ENCODE measurements at regions of chr18 and their contacts with region 1.

Region 1: GRCh38 chr18:4106407-4107033 is 348.6 kb downstream of the DLGAP1 start:
- DNase-seq: peak; percentile 73
- ATAC-seq: peak; percentile 61
- H3K4me3 Mint-ChIP-seq: no peak overlapping the region
- H3K27ac Mint-ChIP-seq: no peak overlapping the region
- H3K4me1 Mint-ChIP-seq: no peaks in the 10 kb centered on the region
- H3K27me3 Mint-ChIP-seq: no peaks in the 10 kb centered on the region

Region 2: DNA sequence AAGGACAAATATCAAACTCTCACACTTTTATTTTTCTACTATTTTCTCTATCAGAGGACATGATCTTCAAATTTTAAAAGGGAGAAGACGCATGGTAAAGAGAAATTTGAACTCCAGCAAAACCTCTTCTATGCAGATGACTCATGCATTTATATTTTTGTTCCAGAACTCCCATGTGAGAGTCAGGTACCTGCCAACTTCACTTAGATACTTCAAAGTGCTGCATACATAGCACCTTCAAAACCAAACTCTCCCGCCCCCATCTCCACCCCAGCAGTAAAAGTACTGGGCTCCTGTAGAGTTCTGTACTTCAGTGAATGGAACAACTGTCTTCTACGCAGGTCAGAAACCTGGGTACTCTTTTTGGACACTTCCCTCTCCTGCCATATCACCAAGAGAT is 258.2 kb before region 1 on chr18:
- CTCF ChIA-PET with region 1: no interaction called
- POLR2A ChIA-PET with region 1: no interaction called
- DNase-seq: no peak
- ATAC-seq: no peak
- H3K4me3 Mint-ChIP-seq: no peak overlapping the region
- H3K27ac Mint-ChIP-seq: no peak overlapping the region
- H3K4me1 Mint-ChIP-seq: no peaks in the 10 kb centered on the region
- H3K27me3 Mint-ChIP-seq: peaks cover 1% of the 10 kb centered on the region

Region 3: GRCh38 chr18:4020026-4020425 is 86.5 kb before region 1 on chr18:
- CTCF ChIA-PET with region 1: no interaction called
- POLR2A ChIA-PET with region 1: no interaction called
- DNase-seq: no peak
- ATAC-seq: no peak
- H3K4me3 Mint-ChIP-seq: no peak overlapping the region
- H3K27ac Mint-ChIP-seq: no peak overlapping the region
- H3K4me1 Mint-ChIP-seq: no peaks in the 10 kb centered on the region
- H3K27me3 Mint-ChIP-seq: no peaks in the 10 kb centered on the region

Region 4: GRCh38 chr18:5057386-5058348 is 951.1 kb after region 1 on chr18:
- CTCF ChIA-PET with region 1: interaction called, 84 read pairs
- POLR2A ChIA-PET with region 1: no interaction called
- DNase-seq: peak; percentile 66
- ATAC-seq: peak; percentile 59
- H3K4me3 Mint-ChIP-seq: no peak overlapping the region
- H3K27ac Mint-ChIP-seq: no peak overlapping the region
- H3K4me1 Mint-ChIP-seq: peaks cover 17% of the 10 kb centered on the region
- H3K27me3 Mint-ChIP-seq: no peaks in the 10 kb centered on the region

Measured in activated CD8-positive, alpha-beta T cell treated with anti-CD3 and anti-CD28 coated beads, Interleukin-2, amount 10 ng/mL, durations not matched to agents 7 days and 5 days (primary cell).